Activated CD4-positive, alpha-beta memory T cell treated with anti-CD3 and anti-CD28 coated beads for 36 hours (primary cell): ENCODE measurements at regions of chr6 and their contacts with region 1.

Region 1: DNA sequence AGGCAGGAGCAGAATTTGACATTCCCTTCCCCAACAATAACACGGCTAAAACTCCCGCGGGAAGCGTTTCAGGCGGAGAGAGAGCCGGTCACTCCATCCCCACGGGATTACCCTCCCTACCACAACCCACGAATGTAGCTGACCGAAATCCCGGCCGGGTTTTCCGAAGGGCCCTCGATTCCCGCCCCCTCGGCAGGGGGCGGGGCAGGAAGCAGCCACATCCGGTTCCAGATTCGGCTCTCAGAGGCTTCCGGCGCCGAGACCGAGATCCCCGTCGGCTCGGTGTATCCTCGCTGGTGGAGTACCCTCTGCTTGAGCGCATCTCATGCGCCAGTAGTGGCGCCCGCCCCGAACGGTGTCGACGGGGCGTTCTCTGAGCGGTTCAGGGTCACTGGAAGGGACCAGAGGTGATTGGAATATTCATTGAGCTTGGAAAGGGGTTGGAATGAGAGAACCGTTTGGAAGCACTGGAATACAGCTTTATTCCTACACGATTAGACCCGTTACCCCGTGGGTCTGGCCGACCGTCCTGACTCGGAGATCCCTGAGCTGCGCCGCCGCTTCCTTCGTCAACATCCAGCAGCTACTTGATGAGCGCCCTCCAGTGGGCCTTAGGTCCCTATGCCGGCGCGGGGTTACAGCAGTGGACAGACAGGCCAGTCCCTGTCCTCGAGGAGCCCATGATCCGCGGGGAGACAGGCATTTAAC is 649 bp upstream of the RGL2 start:
- DNase-seq: peak; percentile 96
- H3K4me3 Mint-ChIP-seq: peak overlapping the region; percentile 89
- H3K27ac Mint-ChIP-seq: peak overlapping the region; percentile 96
- H3K4me1 Mint-ChIP-seq: peaks cover 30% of the 10 kb centered on the region
- H3K27me3 Mint-ChIP-seq: no peaks in the 10 kb centered on the region

Region 2: GRCh38 chr6:33288921-33289748 is 10.3 kb before region 1 on chr6 and contains the starts of genes PFDN6 and WDR46:
- CTCF ChIA-PET with region 1: interaction called, 18 read pairs
- POLR2A ChIA-PET with region 1: interaction called, 30 read pairs
- intact Hi-C with region 1: loop called (anchors 1 kb)
- DNase-seq: peak; percentile 89
- H3K4me3 Mint-ChIP-seq: peak within 1 kb of the TSS; percentile 98
- H3K27ac Mint-ChIP-seq: peak within 1 kb of the TSS; percentile 80
- H3K4me1 Mint-ChIP-seq: peaks cover 41% of the 10 kb centered on the region
- H3K27me3 Mint-ChIP-seq: no peaks in the 10 kb centered on the region
- total RNA-seq, gene PFDN6: 78.5 to 90.9 TPM
- total RNA-seq, gene WDR46: 59.4 to 60.7 TPM

Region 3: DNA sequence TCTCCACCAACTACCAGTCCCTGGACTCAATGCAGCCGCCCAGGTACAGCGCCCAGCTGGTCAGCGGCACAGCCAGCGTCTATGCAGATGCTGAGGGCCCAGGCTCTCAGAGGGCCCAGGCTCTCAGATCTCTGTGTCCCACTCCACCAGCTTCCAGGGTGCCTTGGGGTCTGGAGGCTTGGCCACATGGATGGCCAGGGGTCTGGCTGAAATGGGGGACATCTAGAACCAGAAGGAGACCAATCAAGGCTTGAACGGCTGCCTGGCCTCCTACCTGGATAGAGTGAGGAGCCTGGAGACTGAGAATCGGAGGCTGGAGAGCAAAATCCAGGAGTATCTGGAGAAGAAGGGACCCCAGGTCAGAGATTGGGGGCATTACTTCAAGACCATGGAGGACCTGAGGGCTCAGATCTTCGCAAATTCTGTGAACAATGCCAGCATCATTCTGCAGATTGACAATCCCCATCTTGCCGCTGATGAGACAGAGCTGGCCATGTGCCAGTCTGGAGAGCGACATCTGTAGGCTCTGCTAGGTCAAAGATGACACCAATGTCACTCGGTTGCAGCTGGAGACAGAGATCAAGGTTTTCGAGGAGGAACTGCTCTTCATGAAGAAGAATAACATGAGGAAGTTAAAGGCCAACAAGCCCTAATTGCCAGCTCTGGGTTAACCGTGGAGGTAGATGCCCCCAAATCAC is 890.6 kb after region 1 on chr6:
- CTCF ChIA-PET with region 1: no interaction called
- POLR2A ChIA-PET with region 1: no interaction called
- intact Hi-C with region 1: no loop called
- DNase-seq: peak; percentile 53
- H3K4me3 Mint-ChIP-seq: no peak overlapping the region
- H3K27ac Mint-ChIP-seq: no peak overlapping the region
- H3K4me1 Mint-ChIP-seq: peaks cover 4% of the 10 kb centered on the region
- H3K27me3 Mint-ChIP-seq: no peaks in the 10 kb centered on the region